Naive thymus-derived CD4-positive, alpha-beta T cell (primary cell): ENCODE measurements at regions of chr14 and their contacts with region 1.

Region 1: DNA sequence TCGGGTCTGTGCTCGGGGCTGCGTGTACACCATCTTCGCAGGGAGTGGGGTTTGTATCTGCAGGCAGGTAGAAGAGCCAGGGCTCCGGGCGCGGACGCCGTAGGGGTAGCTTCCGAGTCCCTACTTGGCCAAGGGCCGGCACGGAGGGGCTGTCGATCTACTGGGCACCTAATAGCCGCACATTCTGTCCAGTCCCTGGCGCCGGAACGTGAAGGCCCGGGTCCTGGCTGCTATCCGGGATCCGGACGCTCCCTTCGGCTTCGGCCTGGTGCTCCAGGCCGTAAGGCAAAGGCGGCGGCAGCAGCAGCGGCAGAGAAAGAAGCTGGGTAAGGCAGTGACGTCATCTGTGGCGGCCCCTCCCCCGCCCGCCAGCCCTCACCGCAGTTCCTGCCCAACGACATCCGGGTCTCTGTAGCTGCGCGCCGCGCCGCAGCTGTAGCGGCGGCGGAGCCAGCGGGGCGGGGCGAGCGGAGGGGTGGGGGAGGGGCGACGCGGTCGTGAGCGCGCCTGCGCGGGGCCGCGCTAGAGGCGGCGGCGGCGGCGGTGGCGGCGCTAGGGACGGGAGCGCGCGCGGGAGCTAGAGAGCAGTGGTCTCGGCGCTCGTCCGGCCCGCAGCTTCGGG is at the start of gene PPM1A:
- DNase-seq: peak; percentile 91 to 95 (median 93)
- ATAC-seq: peak; percentile 89
- H3K4me3 ChIP-seq: peak within 1 kb of the TSS; percentile 93
- H3K4me3 Mint-ChIP-seq: peak within 1 kb of the TSS; percentile 90 to 99 (median 96)
- H3K27ac ChIP-seq: peak within 1 kb of the TSS; percentile 100
- H3K27ac Mint-ChIP-seq: peak within 1 kb of the TSS; percentile 97 to 100 (median 100)
- H3K4me1 ChIP-seq: peaks cover 7 to 44% of the 10 kb centered on the region in 2 donors
- H3K4me1 Mint-ChIP-seq: peaks cover 40 to 58% (median 50%) of the 10 kb centered on the region in 7 donors
- H3K27me3 ChIP-seq: no peaks in the 10 kb centered on the region
- H3K27me3 Mint-ChIP-seq: no peaks in the 10 kb centered on the region
- total RNA-seq, gene PPM1A: 42.0 to 71.4 (median 47.3) TPM

Region 2: GRCh38 chr14:58297762-58298476 is 1950.9 kb before region 1 on chr14:
- CTCF ChIA-PET with region 1: no interaction called
- POLR2A ChIA-PET with region 1: interaction called, 10 read pairs
- intact Hi-C with region 1: loop called (anchors 1 to 2 kb)
- DNase-seq: peak; percentile 90 to 100 (median 99)
- ATAC-seq: peak; percentile 91
- H3K4me3 ChIP-seq: peak overlapping the region; percentile 91
- H3K4me3 Mint-ChIP-seq: no peak overlapping the region
- H3K27ac ChIP-seq: peak overlapping the region; percentile 94
- H3K27ac Mint-ChIP-seq: no peak overlapping the region
- H3K4me1 ChIP-seq: peaks cover 17 to 23% of the 10 kb centered on the region in 2 donors
- H3K4me1 Mint-ChIP-seq: peaks cover 36 to 64% (median 55%) of the 10 kb centered on the region in 7 donors
- H3K27me3 ChIP-seq: no peaks in the 10 kb centered on the region
- H3K27me3 Mint-ChIP-seq: no peaks in the 10 kb centered on the region

Region 3: GRCh38 chr14:59964251-59965007 is 284.4 kb before region 1 on chr14:
- CTCF ChIA-PET with region 1: interaction called, 3 read pairs
- POLR2A ChIA-PET with region 1: interaction called, 3 read pairs
- intact Hi-C with region 1: loop called (anchors 1 to 2 kb)
- DNase-seq: peak in 6 of 9 donors; percentile 6 to 38 (median 20)
- ATAC-seq: peak; percentile 44
- H3K4me3 ChIP-seq: no peak overlapping the region
- H3K4me3 Mint-ChIP-seq: peak overlapping the region; percentile 77 to 95 (median 88)
- H3K27ac ChIP-seq: no peak overlapping the region
- H3K27ac Mint-ChIP-seq: peak overlapping the region in 8 of 9 donors; percentile 40 to 99 (median 88)
- H3K4me1 ChIP-seq: no peaks in the 10 kb centered on the region
- H3K4me1 Mint-ChIP-seq: peaks cover 3 to 14% (median 10%) of the 10 kb centered on the region in 7 donors
- H3K27me3 ChIP-seq: no peaks in the 10 kb centered on the region
- H3K27me3 Mint-ChIP-seq: peaks cover 0 to 15% (median 5%) of the 10 kb centered on the region in 5 donors

Region 4: GRCh38 chr14:60195179-60195810 is 53.5 kb before region 1 on chr14:
- CTCF ChIA-PET with region 1: interaction called, 4 read pairs
- POLR2A ChIA-PET with region 1: interaction called, 5 read pairs
- intact Hi-C with region 1: loop called in 1 of 2 experiments (anchors 2 kb)
- DNase-seq: peak in 4 of 9 donors; percentile 13 to 31 (median 22)
- ATAC-seq: peak; percentile 60
- H3K4me3 ChIP-seq: no peak overlapping the region
- H3K4me3 Mint-ChIP-seq: no peak overlapping the region
- H3K27ac ChIP-seq: no peak overlapping the region
- H3K27ac Mint-ChIP-seq: no peak overlapping the region
- H3K4me1 ChIP-seq: no peaks in the 10 kb centered on the region
- H3K4me1 Mint-ChIP-seq: peaks cover 0 to 5% (median 0%) of the 10 kb centered on the region in 7 donors
- H3K27me3 ChIP-seq: no peaks in the 10 kb centered on the region
- H3K27me3 Mint-ChIP-seq: peaks cover 3 to 20% (median 10%) of the 10 kb centered on the region in 5 donors

Region 5: GRCh38 chr14:60331201-60332045 is 82.6 kb after region 1 on chr14:
- CTCF ChIA-PET with region 1: interaction called, 11 read pairs
- POLR2A ChIA-PET with region 1: interaction called, 12 read pairs
- intact Hi-C with region 1: loop called (anchors 1 kb)
- DNase-seq: peak; percentile 53 to 80 (median 74)
- ATAC-seq: peak; percentile 79
- H3K4me3 ChIP-seq: peak overlapping the region; percentile 55
- H3K4me3 Mint-ChIP-seq: peak overlapping the region; percentile 87 to 98 (median 96)
- H3K27ac ChIP-seq: peak overlapping the region; percentile 55
- H3K27ac Mint-ChIP-seq: peak overlapping the region; percentile 87 to 98 (median 92)
- H3K4me1 ChIP-seq: peaks cover 4 to 13% of the 10 kb centered on the region in 2 donors
- H3K4me1 Mint-ChIP-seq: peaks cover 12 to 46% (median 29%) of the 10 kb centered on the region in 7 donors
- H3K27me3 ChIP-seq: no peaks in the 10 kb centered on the region
- H3K27me3 Mint-ChIP-seq: peaks cover 15 to 44% (median 38%) of the 10 kb centered on the region in 5 donors

Region 6: DNA sequence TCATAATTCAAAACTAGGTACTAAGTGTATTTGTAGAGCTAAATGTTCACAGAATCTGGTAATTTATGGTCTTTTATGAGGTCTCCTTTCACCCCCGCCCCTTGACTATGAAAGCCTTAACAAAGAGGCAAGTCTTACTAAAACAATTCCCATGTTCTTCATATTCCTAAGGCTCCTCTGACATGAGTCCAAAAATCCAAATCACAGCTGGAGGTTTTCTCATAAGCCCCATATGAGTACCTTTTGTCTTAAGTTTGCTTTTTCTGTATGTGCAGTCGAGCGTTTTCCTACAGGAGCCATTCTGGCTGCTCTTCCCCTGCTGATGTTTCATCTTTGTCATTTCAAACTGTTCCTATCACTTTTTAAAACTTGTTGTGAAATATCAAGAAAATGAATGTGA is 345.3 kb after region 1 on chr14:
- CTCF ChIA-PET with region 1: no interaction called
- POLR2A ChIA-PET with region 1: no interaction called
- intact Hi-C with region 1: no loop called
- DNase-seq: no peak
- ATAC-seq: no peak
- H3K4me3 ChIP-seq: no peak overlapping the region
- H3K4me3 Mint-ChIP-seq: no peak overlapping the region
- H3K27ac ChIP-seq: no peak overlapping the region
- H3K27ac Mint-ChIP-seq: no peak overlapping the region
- H3K4me1 ChIP-seq: no peaks in the 10 kb centered on the region
- H3K4me1 Mint-ChIP-seq: no peaks in the 10 kb centered on the region
- H3K27me3 ChIP-seq: peaks cover 0 to 3% of the 10 kb centered on the region in 2 donors
- H3K27me3 Mint-ChIP-seq: peaks cover 4 to 35% (median 24%) of the 10 kb centered on the region in 5 donors

Region 7: GRCh38 chr14:61321385-61322010 is 1072.7 kb after region 1 on chr14 and contains the start of gene PRKCH:
- CTCF ChIA-PET with region 1: no interaction called
- POLR2A ChIA-PET with region 1: no interaction called
- intact Hi-C with region 1: loop called in 1 of 2 experiments (anchors 10 kb)
- DNase-seq: peak; percentile 67 to 87 (median 84)
- ATAC-seq: peak; percentile 87
- H3K4me3 ChIP-seq: peak within 1 kb of the TSS; percentile 90
- H3K4me3 Mint-ChIP-seq: peak within 1 kb of the TSS in 9 of 10 donors; percentile 95 to 100 (median 98)
- H3K27ac ChIP-seq: peak within 1 kb of the TSS; percentile 91
- H3K27ac Mint-ChIP-seq: peak within 1 kb of the TSS in 8 of 9 donors; percentile 93 to 99 (median 97)
- H3K4me1 ChIP-seq: peaks cover 20 to 22% of the 10 kb centered on the region in 2 donors
- H3K4me1 Mint-ChIP-seq: peaks cover 9 to 26% (median 25%) of the 10 kb centered on the region in 7 donors
- H3K27me3 ChIP-seq: no peaks in the 10 kb centered on the region
- H3K27me3 Mint-ChIP-seq: no peaks in the 10 kb centered on the region
- total RNA-seq, gene PRKCH: 224 to 359 (median 320) TPM

Region 8: GRCh38 chr14:61761959-61762786 is 1513.4 kb after region 1 on chr14 and contains the start of gene SNAPC1:
- CTCF ChIA-PET with region 1: no interaction called
- POLR2A ChIA-PET with region 1: no interaction called
- intact Hi-C with region 1: loop called (anchors 1 to 5 kb)
- DNase-seq: peak; percentile 92 to 98 (median 96)
- ATAC-seq: peak; percentile 97
- H3K4me3 ChIP-seq: peak within 1 kb of the TSS; percentile 94
- H3K4me3 Mint-ChIP-seq: peak within 1 kb of the TSS; percentile 96 to 100 (median 98)
- H3K27ac ChIP-seq: peak within 1 kb of the TSS; percentile 95
- H3K27ac Mint-ChIP-seq: peak within 1 kb of the TSS; percentile 98 to 100 (median 99)
- H3K4me1 ChIP-seq: peaks cover 13 to 17% of the 10 kb centered on the region in 2 donors
- H3K4me1 Mint-ChIP-seq: peaks cover 27 to 62% (median 53%) of the 10 kb centered on the region in 7 donors
- H3K27me3 ChIP-seq: no peaks in the 10 kb centered on the region
- H3K27me3 Mint-ChIP-seq: peaks cover 0 to 4% (median 0%) of the 10 kb centered on the region in 5 donors
- total RNA-seq, gene SNAPC1: 3.5 to 8.7 (median 5.1) TPM